CD4-positive, alpha-beta T cell (primary cell): ENCODE measurements at regions of chr5 and their contacts with region 1.

Region 1: DNA sequence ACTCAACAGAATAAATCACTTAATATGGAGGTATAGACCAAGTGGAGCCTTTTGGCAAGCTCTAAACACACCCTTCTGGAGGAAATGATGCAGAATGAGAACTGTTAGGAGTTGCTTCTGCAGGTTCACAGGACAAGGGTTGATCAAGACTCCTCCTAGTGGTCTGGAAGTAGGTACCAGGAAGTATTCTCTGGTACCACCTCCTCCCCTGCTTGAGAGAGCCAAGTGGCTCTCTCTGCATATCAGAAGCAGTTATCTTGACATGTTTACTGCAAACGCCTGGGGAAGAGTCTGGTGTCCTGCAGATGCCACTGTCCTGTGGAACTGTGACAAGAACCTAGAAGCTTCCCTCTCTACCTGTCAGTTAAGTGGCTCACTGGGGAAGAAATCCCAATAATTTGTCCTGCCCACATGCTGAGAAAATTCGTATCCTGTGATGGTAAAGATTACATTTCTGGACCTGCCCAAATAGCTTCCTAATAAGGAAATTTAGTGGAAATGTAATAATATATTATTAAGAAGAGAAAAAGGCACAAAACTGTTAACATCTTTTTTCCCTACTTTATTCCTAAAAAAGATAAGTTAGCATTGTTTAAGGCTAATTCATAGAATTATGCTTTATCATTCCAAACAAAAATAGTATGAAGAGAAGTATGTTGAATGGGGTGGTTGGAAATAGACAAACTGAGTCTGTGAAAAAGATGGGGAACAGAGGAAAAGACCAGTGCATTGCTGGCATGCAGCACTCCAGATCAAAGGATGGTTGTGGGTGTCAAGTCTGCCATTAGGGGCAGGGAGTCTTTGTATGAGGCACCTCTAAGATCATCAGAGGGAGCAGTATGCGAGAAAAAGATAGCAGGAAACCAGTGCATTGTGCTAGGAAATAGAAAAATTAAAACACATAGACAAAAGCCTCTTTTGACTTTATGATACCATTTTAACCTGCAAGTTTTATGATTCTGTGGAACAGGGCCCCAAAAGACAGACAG is 118.8 kb downstream of the CDC42SE2 start:
- DNase-seq: peak in 11 of 14 experiments; percentile 16 to 94 (median 52)
- ATAC-seq: peak; percentile 66
- H3K4me3 ChIP-seq: no peak overlapping the region
- H3K4me3 Mint-ChIP-seq: peak overlapping the region; percentile 66
- H3K27ac ChIP-seq: peak overlapping the region; percentile 97 to 99
- H3K27ac Mint-ChIP-seq: peak overlapping the region; percentile 97
- H3K4me1 ChIP-seq: peaks cover 62% of the 10 kb centered on the region
- H3K4me1 Mint-ChIP-seq: peaks cover 94% of the 10 kb centered on the region
- H3K27me3 ChIP-seq: no peaks in the 10 kb centered on the region
- H3K27me3 Mint-ChIP-seq: no peaks in the 10 kb centered on the region
- CTCF ChIP-seq: peak; percentile 68

Region 2: DNA sequence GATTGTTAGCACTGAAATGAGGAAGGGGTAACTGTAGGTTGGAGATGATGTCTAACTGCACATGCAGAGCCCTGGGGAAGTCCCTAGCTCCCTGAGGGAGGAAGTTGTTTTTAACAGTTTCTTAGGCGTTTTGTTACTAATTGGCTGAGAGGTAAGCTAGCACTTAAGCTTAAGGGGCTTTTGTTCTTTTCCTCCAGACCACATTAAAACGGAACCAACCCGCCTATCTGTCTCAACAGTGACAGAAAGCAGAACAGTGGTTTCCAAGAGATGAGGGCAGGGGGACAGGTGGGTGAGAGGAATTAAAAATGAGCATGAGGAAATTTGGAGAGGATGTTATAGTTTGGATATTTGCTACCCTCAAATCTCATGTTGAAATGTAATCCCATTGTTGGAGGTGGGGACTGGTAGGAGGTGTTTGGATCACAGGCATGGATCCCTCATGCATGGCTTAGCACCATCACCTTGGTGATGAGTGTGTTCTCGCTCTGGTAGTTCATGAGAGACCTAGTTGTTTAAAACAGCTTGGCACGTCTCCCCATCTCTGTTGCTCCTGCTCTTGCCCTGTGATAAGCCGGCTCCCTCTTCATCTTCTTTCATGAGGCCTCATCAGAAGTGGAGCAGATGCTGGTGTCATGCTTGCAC is 173.1 kb before region 1 on chr5:
- CTCF ChIA-PET with region 1: interaction called, 3 read pairs
- POLR2A ChIA-PET with region 1: interaction called, 5 read pairs
- intact Hi-C with region 1: loop called in 1 of 2 experiments (anchors 1 kb)
- DNase-seq: peak; percentile 7 to 91 (median 40)
- ATAC-seq: peak; percentile 93
- H3K4me3 ChIP-seq: peak overlapping the region; percentile 19
- H3K4me3 Mint-ChIP-seq: peak overlapping the region; percentile 77
- H3K27ac ChIP-seq: peak overlapping the region; percentile 69 to 79
- H3K27ac Mint-ChIP-seq: peak overlapping the region; percentile 96
- H3K4me1 ChIP-seq: peaks cover 25% of the 10 kb centered on the region
- H3K4me1 Mint-ChIP-seq: peaks cover 62% of the 10 kb centered on the region
- H3K27me3 ChIP-seq: no peaks in the 10 kb centered on the region
- H3K27me3 Mint-ChIP-seq: no peaks in the 10 kb centered on the region
- CTCF ChIP-seq: no peak

Region 3: DNA sequence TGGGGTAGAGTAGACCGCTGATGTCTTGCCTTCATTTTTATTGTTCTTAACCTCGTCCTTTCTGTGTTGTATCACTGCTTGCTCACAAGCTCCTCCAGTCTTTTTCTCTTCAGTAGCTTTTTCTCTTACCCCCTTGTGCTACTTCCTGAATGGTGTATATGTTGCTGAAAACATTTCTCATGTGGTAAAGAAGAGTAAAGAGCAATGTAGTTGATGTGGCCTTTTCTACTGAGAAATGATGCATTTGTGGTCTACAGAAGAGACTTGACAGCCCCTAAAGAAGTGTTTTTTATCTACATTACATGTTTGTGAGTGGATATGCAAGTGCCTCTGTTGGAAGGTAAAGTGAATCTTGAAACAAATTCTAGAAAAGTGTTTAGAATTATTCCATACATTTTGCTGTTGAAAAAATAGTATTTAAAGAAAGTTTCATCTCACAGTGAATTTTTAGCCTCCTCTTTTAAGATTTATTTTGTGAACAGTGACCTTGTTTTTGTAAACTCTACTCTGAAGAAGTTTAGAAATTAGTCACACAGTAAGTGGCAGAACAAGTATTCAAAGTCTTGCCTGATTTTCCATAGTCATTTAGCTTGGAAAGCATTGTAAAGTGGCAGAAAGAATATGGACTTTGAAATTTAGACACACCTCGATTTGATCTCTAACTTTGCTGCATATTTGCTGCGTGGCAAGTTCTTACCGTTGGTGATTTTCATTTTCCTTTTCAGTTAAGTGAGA is 101.4 kb before region 1 on chr5:
- CTCF ChIA-PET with region 1: interaction called, 11 read pairs
- POLR2A ChIA-PET with region 1: interaction called, 395 read pairs
- intact Hi-C with region 1: loop called in 1 of 2 experiments (anchors 1 kb)
- DNase-seq: peak in 3 of 14 experiments; percentile 84 to 91 (median 90)
- ATAC-seq: peak; percentile 81
- H3K4me3 ChIP-seq: peak overlapping the region; percentile 52
- H3K4me3 Mint-ChIP-seq: peak overlapping the region; percentile 74
- H3K27ac ChIP-seq: peak overlapping the region; percentile 39 to 76
- H3K27ac Mint-ChIP-seq: peak overlapping the region; percentile 77
- H3K4me1 ChIP-seq: peaks cover 60% of the 10 kb centered on the region
- H3K4me1 Mint-ChIP-seq: peaks cover 80% of the 10 kb centered on the region
- H3K27me3 ChIP-seq: no peaks in the 10 kb centered on the region
- H3K27me3 Mint-ChIP-seq: no peaks in the 10 kb centered on the region
- CTCF ChIP-seq: no peak

Region 4: GRCh38 chr5:131338051-131338453 is 44.6 kb before region 1 on chr5:
- CTCF ChIA-PET with region 1: interaction called, 12 read pairs
- POLR2A ChIA-PET with region 1: interaction called, 14 read pairs
- intact Hi-C with region 1: loop called in 1 of 2 experiments (anchors 5 kb)
- DNase-seq: no peak
- ATAC-seq: no peak
- H3K4me3 ChIP-seq: no peak overlapping the region
- H3K4me3 Mint-ChIP-seq: peak overlapping the region; percentile 34
- H3K27ac ChIP-seq: peak overlapping the region in 1 of 2 donors; percentile 64
- H3K27ac Mint-ChIP-seq: peak overlapping the region; percentile 77
- H3K4me1 ChIP-seq: peaks cover 43% of the 10 kb centered on the region
- H3K4me1 Mint-ChIP-seq: peaks cover 83% of the 10 kb centered on the region
- H3K27me3 ChIP-seq: no peaks in the 10 kb centered on the region
- H3K27me3 Mint-ChIP-seq: no peaks in the 10 kb centered on the region
- CTCF ChIP-seq: no peak

Region 5: GRCh38 chr5:131364507-131365050 is 18.1 kb before region 1 on chr5:
- CTCF ChIA-PET with region 1: interaction called, 7 read pairs
- POLR2A ChIA-PET with region 1: interaction called, 21 read pairs
- intact Hi-C with region 1: loop called in 1 of 2 experiments (anchors 2 kb)
- DNase-seq: peak in 4 of 14 experiments; percentile 43 to 70 (median 44)
- ATAC-seq: peak; percentile 76
- H3K4me3 ChIP-seq: no peak overlapping the region
- H3K4me3 Mint-ChIP-seq: peak overlapping the region; percentile 63
- H3K27ac ChIP-seq: peak overlapping the region; percentile 32 to 61
- H3K27ac Mint-ChIP-seq: peak overlapping the region; percentile 81
- H3K4me1 ChIP-seq: peaks cover 41% of the 10 kb centered on the region
- H3K4me1 Mint-ChIP-seq: peaks cover 89% of the 10 kb centered on the region
- H3K27me3 ChIP-seq: no peaks in the 10 kb centered on the region
- H3K27me3 Mint-ChIP-seq: no peaks in the 10 kb centered on the region
- CTCF ChIP-seq: no peak

Region 6: DNA sequence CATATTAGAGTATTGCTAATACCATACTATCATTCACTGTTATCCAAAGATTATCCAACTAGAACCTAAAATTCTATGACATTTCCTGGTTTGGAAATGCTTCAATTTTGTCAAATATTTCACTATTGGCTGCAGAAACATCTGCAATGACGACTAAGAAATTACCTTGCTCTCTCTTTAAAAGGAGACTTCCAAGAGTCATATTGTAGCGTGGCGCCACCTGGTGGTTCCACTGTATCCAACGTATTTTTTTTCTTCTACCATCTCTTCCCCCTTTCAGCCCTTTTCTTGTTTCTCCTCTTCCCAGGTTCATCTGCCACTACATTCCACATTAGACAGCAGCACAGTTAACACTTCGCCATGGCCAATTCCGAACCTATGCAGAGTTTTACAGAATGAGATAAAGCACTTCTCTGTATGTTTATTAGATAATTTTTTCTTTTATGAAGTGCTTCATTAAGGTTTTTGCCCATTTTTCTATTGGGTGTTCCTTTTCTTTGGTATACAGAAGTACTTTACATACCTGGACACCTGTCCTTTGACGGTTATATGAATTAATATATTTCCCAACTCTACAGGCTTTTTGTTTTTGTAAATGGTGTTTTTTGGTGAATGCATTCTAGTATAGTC is 34.7 kb after region 1 on chr5:
- CTCF ChIA-PET with region 1: interaction called, 9 read pairs
- POLR2A ChIA-PET with region 1: interaction called, 3 read pairs
- intact Hi-C with region 1: loop called in 1 of 2 experiments (anchors 2 kb)
- DNase-seq: peak; percentile 73 to 93 (median 82)
- ATAC-seq: peak; percentile 30
- H3K4me3 ChIP-seq: no peak overlapping the region
- H3K4me3 Mint-ChIP-seq: peak overlapping the region; percentile 6
- H3K27ac ChIP-seq: no peak overlapping the region
- H3K27ac Mint-ChIP-seq: peak overlapping the region; percentile 70
- H3K4me1 ChIP-seq: peaks cover 18% of the 10 kb centered on the region
- H3K4me1 Mint-ChIP-seq: peaks cover 50% of the 10 kb centered on the region
- H3K27me3 ChIP-seq: no peaks in the 10 kb centered on the region
- H3K27me3 Mint-ChIP-seq: no peaks in the 10 kb centered on the region
- CTCF ChIP-seq: peak; percentile 92

Region 7: GRCh38 chr5:131538177-131538593 is 155.5 kb after region 1 on chr5:
- CTCF ChIA-PET with region 1: no interaction called
- POLR2A ChIA-PET with region 1: no interaction called
- intact Hi-C with region 1: no loop called
- DNase-seq: peak in 2 of 14 experiments; percentile 50 to 57
- ATAC-seq: peak; percentile 25
- H3K4me3 ChIP-seq: no peak overlapping the region
- H3K4me3 Mint-ChIP-seq: peak overlapping the region; percentile 25
- H3K27ac ChIP-seq: no peak overlapping the region
- H3K27ac Mint-ChIP-seq: peak overlapping the region; percentile 76
- H3K4me1 ChIP-seq: peaks cover 21% of the 10 kb centered on the region
- H3K4me1 Mint-ChIP-seq: peaks cover 92% of the 10 kb centered on the region
- H3K27me3 ChIP-seq: no peaks in the 10 kb centered on the region
- H3K27me3 Mint-ChIP-seq: no peaks in the 10 kb centered on the region
- CTCF ChIP-seq: no peak